Ovary (tissue), 10 donors: ENCODE measurements at regions of chr4 and their contacts with region 1.

Region 1: DNA sequence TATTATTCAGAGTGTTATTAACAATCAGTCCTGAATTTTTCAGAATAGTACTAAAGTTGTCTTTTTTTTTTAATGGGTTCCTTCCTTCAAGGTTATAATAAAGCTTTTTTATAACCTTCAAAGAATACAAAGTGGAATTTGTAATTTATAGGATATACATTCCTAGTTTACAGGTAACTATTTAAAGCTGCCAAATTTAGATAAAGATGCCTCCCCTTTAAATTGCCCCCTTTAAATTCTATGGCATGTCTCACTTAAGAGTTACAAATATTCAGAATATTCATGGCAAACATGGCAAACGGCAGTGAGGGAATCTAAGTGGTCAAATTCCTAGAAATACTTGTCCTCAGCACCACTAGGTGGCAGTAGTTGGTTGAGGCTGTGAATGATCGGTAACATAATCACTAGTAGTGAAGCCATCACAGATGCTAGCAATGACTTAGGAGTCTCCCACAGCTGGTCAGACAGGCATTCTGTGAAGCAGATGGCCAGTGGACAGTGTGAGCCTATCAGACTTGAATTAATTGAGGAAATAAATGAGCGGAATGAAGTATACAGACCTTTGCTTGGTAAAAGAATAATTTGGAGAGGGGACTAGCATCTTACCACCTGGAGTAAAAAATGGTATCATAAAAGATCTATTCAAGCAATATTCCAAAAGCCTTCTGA is 86.4 kb downstream of the CBR4 start:
- DNase-seq: peak in 3 of 5 donors; percentile 38 to 66 (median 64)
- H3K4me3 ChIP-seq: no peak overlapping the region
- H3K27ac ChIP-seq: no peak overlapping the region
- H3K4me1 ChIP-seq: no peaks in the 10 kb centered on the region
- H3K27me3 ChIP-seq: no peaks in the 10 kb centered on the region
- CTCF ChIP-seq: peak; percentile 66 to 75 (median 70)
- EP300 ChIP-seq: no peak
- POLR2A ChIP-seq: no peak

Region 2: GRCh38 chr4:168440442-168441264 is 483.0 kb before region 1 on chr4:
- intact Hi-C with region 1: no loop called
- DNase-seq: no peak
- H3K4me3 ChIP-seq: no peak overlapping the region
- H3K27ac ChIP-seq: no peak overlapping the region
- H3K4me1 ChIP-seq: no peaks in the 10 kb centered on the region
- H3K27me3 ChIP-seq: no peaks in the 10 kb centered on the region
- CTCF ChIP-seq: no peak
- EP300 ChIP-seq: no peak
- POLR2A ChIP-seq: no peak

Region 3: GRCh38 chr4:168585168-168586091 is 338.2 kb before region 1 on chr4:
- intact Hi-C with region 1: loop called in 1 of 4 experiments (anchors 5 kb)
- DNase-seq: peak; percentile 77 to 85 (median 82)
- H3K4me3 ChIP-seq: no peak overlapping the region
- H3K27ac ChIP-seq: no peak overlapping the region
- H3K4me1 ChIP-seq: no peaks in the 10 kb centered on the region
- H3K27me3 ChIP-seq: no peaks in the 10 kb centered on the region
- CTCF ChIP-seq: peak; percentile 7 to 58 (median 55)
- EP300 ChIP-seq: no peak
- POLR2A ChIP-seq: no peak